B cell (primary cell): ENCODE measurements at regions of chr10 and their contacts with region 1.

Region 1: DNA sequence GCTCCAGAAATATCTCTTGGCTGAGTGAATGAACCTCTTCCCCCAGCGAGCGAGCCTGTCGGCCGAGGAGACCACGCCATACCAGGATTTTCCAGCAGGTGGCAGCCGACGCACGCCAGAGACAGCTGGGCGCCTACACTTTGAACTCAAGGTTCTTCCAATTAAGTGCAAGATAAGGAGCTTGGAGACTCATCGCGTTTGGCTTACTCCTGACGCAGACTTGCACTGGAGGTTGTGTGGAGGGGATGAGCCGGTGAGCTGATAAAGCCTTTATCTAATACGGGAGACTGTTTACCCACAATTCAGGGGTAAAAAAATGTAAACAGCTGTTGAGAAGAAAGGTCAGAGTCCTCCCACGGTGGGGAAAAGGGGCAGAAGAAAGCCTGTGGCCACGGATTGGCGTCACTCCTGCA is 45.9 kb upstream of the EMX2 start:
- DNase-seq: peak; percentile 66
- ATAC-seq: peak; percentile 60
- H3K4me3 ChIP-seq: no peak overlapping the region
- H3K4me3 Mint-ChIP-seq: no peak overlapping the region
- H3K27ac ChIP-seq: no peak overlapping the region
- H3K27ac Mint-ChIP-seq: no peak overlapping the region
- H3K4me1 ChIP-seq: no peaks in the 10 kb centered on the region
- H3K4me1 Mint-ChIP-seq: no peaks in the 10 kb centered on the region
- H3K27me3 ChIP-seq: peaks cover 0 to 6% (median 0%) of the 10 kb centered on the region in 4 experiments
- H3K27me3 Mint-ChIP-seq: peaks cover 45% of the 10 kb centered on the region
- CTCF ChIP-seq: peak; percentile 95

Region 2: DNA sequence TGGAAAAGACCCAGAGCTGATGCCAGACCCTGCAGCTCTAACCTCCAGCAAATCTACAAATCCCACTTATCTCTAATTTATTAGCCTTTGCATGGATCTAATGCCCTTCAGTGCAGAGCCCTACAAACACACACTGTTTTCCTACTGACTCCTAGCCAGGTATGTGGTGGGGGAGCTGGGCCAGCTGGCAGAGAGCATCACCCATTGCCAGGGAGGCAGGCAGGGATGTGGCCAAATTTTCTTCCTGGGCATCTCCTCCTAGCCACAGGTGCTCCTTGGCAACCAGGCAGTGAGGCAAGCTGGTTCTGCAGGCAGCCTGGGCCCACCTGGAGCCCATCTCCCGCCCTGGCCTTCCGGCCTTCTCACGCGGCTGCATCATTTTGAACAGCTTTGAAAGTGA is 10.0 kb before region 1 on chr10:
- CTCF ChIA-PET with region 1: interaction called, 10 read pairs
- POLR2A ChIA-PET with region 1: no interaction called
- intact Hi-C with region 1: no loop called
- DNase-seq: no peak
- ATAC-seq: no peak
- H3K4me3 ChIP-seq: no peak overlapping the region
- H3K4me3 Mint-ChIP-seq: no peak overlapping the region
- H3K27ac ChIP-seq: no peak overlapping the region
- H3K27ac Mint-ChIP-seq: no peak overlapping the region
- H3K4me1 ChIP-seq: no peaks in the 10 kb centered on the region
- H3K4me1 Mint-ChIP-seq: no peaks in the 10 kb centered on the region
- H3K27me3 ChIP-seq: no peaks in the 10 kb centered on the region
- H3K27me3 Mint-ChIP-seq: peaks cover under 1% of the 10 kb centered on the region
- CTCF ChIP-seq: no peak

Region 3: DNA sequence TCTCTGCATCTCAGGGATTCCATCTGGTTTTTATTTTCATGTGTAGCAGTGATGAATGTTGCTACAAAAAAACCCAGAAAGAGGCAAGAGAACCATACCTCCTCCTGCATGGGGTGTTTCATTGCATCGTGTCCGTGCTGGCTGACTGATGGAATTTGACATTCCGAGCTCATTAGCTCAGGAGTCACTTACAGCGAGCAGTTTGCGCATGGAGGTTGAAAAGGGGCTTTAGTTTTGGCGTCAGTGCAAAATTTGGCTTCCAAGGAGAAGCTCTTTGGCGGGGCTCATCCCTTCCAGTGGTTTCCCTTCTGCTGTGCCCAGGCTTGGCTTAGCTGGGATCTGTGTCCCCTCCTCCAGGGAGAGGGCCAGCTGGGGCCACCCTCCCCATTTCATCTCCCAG is 71.7 kb after region 1 on chr10:
- CTCF ChIA-PET with region 1: no interaction called
- POLR2A ChIA-PET with region 1: no interaction called
- intact Hi-C with region 1: no loop called
- DNase-seq: no peak
- ATAC-seq: no peak
- H3K4me3 ChIP-seq: no peak overlapping the region
- H3K4me3 Mint-ChIP-seq: no peak overlapping the region
- H3K27ac ChIP-seq: no peak overlapping the region
- H3K27ac Mint-ChIP-seq: no peak overlapping the region
- H3K4me1 ChIP-seq: no peaks in the 10 kb centered on the region
- H3K4me1 Mint-ChIP-seq: no peaks in the 10 kb centered on the region
- H3K27me3 ChIP-seq: peaks cover 0 to 5% (median 0%) of the 10 kb centered on the region in 4 experiments
- H3K27me3 Mint-ChIP-seq: peaks cover 14% of the 10 kb centered on the region
- CTCF ChIP-seq: no peak

Region 4: GRCh38 chr10:118241229-118242137 is 744.9 kb after region 1 on chr10:
- CTCF ChIA-PET with region 1: interaction called, 137 read pairs
- POLR2A ChIA-PET with region 1: no interaction called
- intact Hi-C with region 1: no loop called
- DNase-seq: peak; percentile 67
- ATAC-seq: no peak
- H3K4me3 ChIP-seq: no peak overlapping the region
- H3K4me3 Mint-ChIP-seq: no peak overlapping the region
- H3K27ac ChIP-seq: no peak overlapping the region
- H3K27ac Mint-ChIP-seq: no peak overlapping the region
- H3K4me1 ChIP-seq: no peaks in the 10 kb centered on the region
- H3K4me1 Mint-ChIP-seq: no peaks in the 10 kb centered on the region
- H3K27me3 ChIP-seq: peaks cover 0 to 25% (median 12%) of the 10 kb centered on the region in 4 experiments
- H3K27me3 Mint-ChIP-seq: peaks cover 48% of the 10 kb centered on the region
- CTCF ChIP-seq: peak; percentile 99

Region 5: GRCh38 chr10:118459726-118460193 is 963.1 kb after region 1 on chr10:
- CTCF ChIA-PET with region 1: interaction called, 57 read pairs
- POLR2A ChIA-PET with region 1: no interaction called
- intact Hi-C with region 1: no loop called
- DNase-seq: peak; percentile 52
- ATAC-seq: no peak
- H3K4me3 ChIP-seq: no peak overlapping the region
- H3K4me3 Mint-ChIP-seq: peak overlapping the region; percentile 60
- H3K27ac ChIP-seq: no peak overlapping the region
- H3K27ac Mint-ChIP-seq: no peak overlapping the region
- H3K4me1 ChIP-seq: peaks cover 0 to 3% of the 10 kb centered on the region in 2 donors
- H3K4me1 Mint-ChIP-seq: peaks cover 4% of the 10 kb centered on the region
- H3K27me3 ChIP-seq: peaks cover 0 to 10% (median 4%) of the 10 kb centered on the region in 4 experiments
- H3K27me3 Mint-ChIP-seq: peaks cover 36% of the 10 kb centered on the region
- CTCF ChIP-seq: peak; percentile 85

Region 6: DNA sequence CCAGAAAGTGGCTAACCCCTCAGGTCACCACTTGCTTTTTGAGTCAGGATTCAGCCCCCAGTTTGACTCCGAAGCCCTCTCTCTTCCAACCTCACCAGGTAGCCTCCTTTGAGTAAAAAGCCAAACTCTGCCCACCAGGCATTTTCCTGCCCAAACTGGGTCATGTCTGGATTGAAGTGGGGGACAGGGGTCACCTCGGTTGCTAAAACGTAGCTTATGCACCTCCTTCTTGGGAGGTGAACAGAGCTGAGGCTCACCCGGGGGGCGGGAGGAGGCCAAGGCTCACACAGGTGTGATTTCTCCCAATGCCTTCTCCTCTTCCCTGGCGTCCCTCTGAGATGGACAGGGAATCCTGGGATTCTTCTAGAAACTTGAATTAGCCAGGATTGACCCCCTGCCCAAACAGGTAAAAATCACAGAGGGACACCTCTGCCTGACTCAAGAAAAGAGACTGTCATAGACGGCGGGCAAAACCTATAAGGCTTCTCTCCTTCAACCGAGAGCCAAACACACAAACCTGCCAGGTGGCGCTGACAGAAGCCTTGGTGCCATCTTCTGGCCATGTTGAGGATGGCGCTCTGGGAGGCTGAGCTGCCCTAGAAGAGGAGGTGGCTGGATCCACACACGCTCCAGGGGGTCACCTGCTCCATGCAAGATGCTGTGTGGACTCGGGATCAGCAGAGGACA is 1047.2 kb after region 1 on chr10:
- CTCF ChIA-PET with region 1: no interaction called
- POLR2A ChIA-PET with region 1: no interaction called
- intact Hi-C with region 1: loop called (anchors 5 kb)
- DNase-seq: peak; percentile 27
- ATAC-seq: no peak
- H3K4me3 ChIP-seq: no peak overlapping the region
- H3K4me3 Mint-ChIP-seq: no peak overlapping the region
- H3K27ac ChIP-seq: no peak overlapping the region
- H3K27ac Mint-ChIP-seq: no peak overlapping the region
- H3K4me1 ChIP-seq: no peaks in the 10 kb centered on the region
- H3K4me1 Mint-ChIP-seq: no peaks in the 10 kb centered on the region
- H3K27me3 ChIP-seq: peaks cover 0 to 11% (median 4%) of the 10 kb centered on the region in 4 experiments
- H3K27me3 Mint-ChIP-seq: peaks cover 57% of the 10 kb centered on the region
- CTCF ChIP-seq: peak; percentile 54